ENCODE measurements at regions of chr13 and their contacts with region 1.

Region 1: DNA sequence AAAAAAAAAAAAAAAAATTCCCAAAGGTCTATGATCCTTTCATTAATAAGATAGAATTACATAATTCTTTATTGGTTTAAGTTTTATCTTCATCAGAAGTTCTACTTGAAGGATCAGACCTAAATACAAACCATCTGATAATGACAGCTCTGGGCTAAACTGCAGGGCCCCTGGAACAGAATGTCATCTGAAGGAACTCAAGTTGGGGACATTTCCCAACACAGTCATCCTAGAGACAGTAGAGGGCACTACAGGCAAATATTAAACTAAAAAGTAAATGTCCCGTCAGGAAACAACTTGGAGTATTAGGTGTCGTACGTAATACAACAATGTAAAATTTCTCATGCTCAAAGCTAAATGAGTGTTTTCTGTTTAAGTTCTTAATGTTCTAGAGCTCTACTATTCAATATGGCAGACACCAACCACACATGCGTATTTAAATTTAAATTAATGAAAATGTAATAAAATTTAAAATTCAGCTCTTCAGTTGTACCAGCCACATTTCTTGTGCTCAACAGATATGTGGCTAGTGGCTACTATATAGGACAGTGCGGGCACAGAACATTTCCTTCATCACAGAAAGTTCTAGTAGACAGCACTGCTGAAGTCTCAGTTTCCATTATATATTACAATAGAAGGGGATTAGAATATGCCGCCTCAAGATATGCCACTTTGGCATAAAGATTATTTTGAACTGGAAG is 21.8 kb upstream of the NAXD start:
- DNase-seq: no peak
- ATAC-seq: peak; percentile 81
- H3K4me3 Mint-ChIP-seq: no peak overlapping the region
- H3K27ac Mint-ChIP-seq: no peak overlapping the region
- H3K4me1 Mint-ChIP-seq: no peaks in the 10 kb centered on the region
- H3K27me3 Mint-ChIP-seq: no peaks in the 10 kb centered on the region
- CTCF ChIP-seq: no peak

Region 2: DNA sequence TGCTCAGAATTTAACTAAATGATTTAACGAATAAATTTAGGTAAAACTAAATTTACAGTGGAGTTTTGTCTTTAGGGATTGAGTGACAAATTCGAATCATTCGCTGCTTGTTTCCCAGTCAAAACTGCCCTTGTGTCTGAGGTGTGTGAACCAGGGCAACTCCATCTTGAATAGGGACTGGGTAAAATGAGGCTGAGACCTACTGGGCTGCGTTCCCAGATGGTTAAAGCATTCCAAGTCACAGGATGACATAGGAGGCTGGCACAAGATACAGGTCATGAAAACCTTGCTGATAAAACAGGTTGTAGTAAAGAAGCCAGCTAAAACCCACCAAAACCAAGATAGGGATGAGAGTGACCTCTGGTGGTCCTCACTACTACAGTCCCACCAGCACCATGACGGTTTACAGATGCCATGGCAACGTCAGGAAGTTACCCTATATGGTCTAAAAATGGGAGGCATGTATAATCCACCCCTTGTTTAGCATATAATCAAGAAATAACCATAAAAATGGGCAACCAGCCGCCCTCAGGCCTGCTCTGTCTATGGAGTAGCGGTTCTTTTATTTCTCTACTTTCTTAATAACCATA is 331.5 kb after region 1 on chr13:
- CTCF ChIA-PET with region 1: interaction called, 9 read pairs
- POLR2A ChIA-PET with region 1: no interaction called
- intact Hi-C with region 1: loop called (anchors 1 kb)
- DNase-seq: no peak
- ATAC-seq: peak; percentile 28
- H3K4me3 Mint-ChIP-seq: no peak overlapping the region
- H3K27ac Mint-ChIP-seq: no peak overlapping the region
- H3K4me1 Mint-ChIP-seq: peaks cover 21% of the 10 kb centered on the region
- H3K27me3 Mint-ChIP-seq: peaks cover 13% of the 10 kb centered on the region
- CTCF ChIP-seq: no peak

Measured in activated B cell treated with CpG ODN at 0.5 μM for 24 hours (primary cell).